ENCODE measurements at regions of chr9 and their contacts with region 1.

Region 1: DNA sequence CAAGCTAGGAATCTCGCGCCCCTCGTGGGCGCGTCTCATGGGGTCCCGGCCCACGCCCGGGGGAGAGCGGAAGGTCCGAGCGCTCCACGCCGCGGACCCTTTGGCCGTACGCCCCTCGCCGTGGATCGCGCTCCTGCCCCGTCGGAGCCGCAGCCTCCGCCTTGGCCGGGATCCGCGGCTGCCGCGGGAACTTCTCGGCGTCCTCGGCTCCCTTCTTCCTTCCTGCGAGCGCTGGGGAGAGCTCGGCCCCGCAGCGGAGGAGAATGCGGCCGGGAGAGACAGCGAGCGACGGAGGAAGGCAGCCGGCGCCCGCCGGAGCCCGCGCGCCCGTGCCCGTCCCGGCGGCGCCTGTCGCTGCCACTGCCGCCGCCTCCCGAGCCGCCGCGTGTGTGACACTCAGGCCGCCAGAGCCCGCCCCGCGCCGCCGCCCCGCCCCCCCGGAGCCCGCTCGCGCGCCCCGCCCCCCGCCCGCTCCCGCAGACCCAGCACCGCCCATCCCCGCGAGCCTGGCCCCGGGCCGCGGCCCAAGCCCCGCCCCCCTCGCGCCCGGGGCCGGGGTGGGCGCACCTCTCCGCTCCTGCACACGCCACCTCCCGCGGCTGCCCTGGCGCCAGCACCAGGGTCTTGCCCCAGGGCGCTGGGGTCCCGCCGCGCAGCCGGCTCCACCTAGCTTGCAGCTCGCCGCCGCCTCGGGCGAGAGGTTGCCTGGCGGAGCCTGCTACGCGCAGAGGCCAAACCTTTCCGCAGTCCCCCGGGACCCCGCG is at the start of gene SHB:
- DNase-seq: peak; percentile 73
- H3K4me3 Mint-ChIP-seq: peak within 1 kb of the TSS; percentile 68
- H3K27ac Mint-ChIP-seq: no peak within 1 kb of the TSS
- H3K4me1 Mint-ChIP-seq: peaks cover 19% of the 10 kb centered on the region
- H3K27me3 Mint-ChIP-seq: peaks cover 8% of the 10 kb centered on the region
- total RNA-seq, gene SHB: 1.2 TPM

Region 2: GRCh38 chr9:37485389-37486219 is 583.4 kb before region 1 on chr9 and contains the start of gene POLR1E:
- CTCF ChIA-PET with region 1: no interaction called
- intact Hi-C with region 1: loop called (anchors 5 kb)
- DNase-seq: peak; percentile 97
- H3K4me3 Mint-ChIP-seq: peak within 1 kb of the TSS; percentile 99
- H3K27ac Mint-ChIP-seq: peak within 1 kb of the TSS; percentile 85
- H3K4me1 Mint-ChIP-seq: peaks cover 39% of the 10 kb centered on the region
- H3K27me3 Mint-ChIP-seq: peaks cover 6% of the 10 kb centered on the region
- total RNA-seq, gene POLR1E: 60.7 to 62.9 TPM

Region 3: GRCh38 chr9:37746848-37747753 is 321.9 kb before region 1 on chr9:
- CTCF ChIA-PET with region 1: no interaction called
- intact Hi-C with region 1: loop called (anchors 5 kb)
- DNase-seq: peak; percentile 80
- H3K4me3 Mint-ChIP-seq: no peak overlapping the region
- H3K27ac Mint-ChIP-seq: no peak overlapping the region
- H3K4me1 Mint-ChIP-seq: no peaks in the 10 kb centered on the region
- H3K27me3 Mint-ChIP-seq: no peaks in the 10 kb centered on the region

Region 4: DNA sequence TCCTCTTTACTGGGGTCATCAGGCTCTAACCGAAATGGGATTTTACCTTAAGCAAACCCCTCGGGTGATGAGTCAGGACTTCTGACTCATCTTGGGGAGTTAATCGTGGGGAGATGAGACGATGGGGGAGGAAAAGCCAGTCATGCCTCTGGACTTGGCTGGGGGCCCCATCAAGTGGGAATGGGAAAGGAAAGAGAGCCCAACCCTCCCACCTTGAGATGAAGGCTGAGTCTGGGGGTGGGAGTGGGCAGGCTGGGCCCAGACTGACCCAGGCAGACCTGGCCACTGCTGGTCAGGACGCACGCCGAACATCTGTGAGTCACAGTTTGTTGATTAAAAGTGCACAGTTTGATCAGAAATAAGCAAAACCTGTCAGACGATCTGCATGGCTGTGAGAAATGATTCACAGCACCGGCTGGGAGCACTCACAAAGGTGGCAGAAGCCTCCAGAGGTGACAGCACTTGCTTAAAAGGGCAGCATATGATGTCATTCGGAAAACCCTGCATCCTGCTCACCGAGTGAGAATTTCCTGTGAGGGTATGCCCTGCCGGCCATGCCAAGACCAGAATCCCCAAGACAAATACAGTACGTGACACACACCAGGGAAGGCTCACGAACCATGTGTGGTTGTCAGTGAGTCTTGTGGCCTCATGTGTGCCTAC is 115.1 kb before region 1 on chr9:
- CTCF ChIA-PET with region 1: no interaction called
- intact Hi-C with region 1: loop called (anchors 2 kb)
- DNase-seq: peak; percentile 66
- H3K4me3 Mint-ChIP-seq: no peak overlapping the region
- H3K27ac Mint-ChIP-seq: peak overlapping the region; percentile 69
- H3K4me1 Mint-ChIP-seq: peaks cover 21% of the 10 kb centered on the region
- H3K27me3 Mint-ChIP-seq: no peaks in the 10 kb centered on the region

Region 5: DNA sequence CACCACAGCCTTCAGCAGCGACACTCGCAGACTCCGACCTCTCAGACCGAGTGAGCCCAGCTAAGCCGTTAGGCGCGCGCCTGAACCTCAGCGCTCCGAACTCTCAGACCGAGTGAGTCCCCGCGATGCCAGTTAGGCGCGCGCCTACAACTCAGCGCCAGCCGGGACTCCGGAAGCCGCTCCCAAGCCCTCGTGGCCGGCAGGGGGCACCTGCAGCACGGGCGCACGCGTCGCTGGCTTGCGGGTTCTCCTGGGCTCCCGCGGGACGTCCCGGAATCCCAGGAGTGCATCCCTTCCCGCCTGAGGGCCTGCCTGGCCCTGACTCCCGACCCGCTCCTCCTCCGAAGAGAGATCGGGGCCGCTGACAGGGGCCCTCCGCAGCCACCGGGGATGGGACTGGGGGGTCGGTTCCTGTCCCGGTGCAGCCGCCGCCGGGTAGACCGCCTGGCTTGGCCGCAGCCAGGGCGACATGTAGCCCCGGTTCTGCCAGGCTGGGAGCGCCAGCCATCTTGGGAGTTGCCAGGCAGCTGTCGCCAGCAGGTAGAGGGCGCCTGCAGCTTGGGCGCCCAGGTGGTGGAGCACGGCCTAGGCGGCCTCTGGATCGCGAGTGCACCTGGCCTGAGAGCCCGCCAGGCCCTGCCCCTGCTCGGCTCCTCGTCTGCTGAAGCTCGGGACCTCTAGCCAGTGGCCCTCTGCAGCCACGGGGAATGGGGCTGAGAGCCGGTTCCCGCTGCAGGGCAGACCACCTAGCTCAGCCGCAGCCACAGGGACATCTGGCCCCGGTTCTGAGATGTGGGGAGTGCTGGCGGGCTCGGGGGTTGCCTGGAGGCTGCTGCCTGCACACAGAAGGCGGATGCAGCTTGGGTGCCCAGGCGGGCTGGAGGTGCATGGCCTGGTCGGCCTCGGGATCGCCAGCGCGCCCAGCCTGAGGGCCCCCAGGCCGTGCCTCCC is 551.7 kb after region 1 on chr9 and contains the start of gene ANKRD18A:
- CTCF ChIA-PET with region 1: no interaction called
- intact Hi-C with region 1: loop called (anchors 5 kb)
- DNase-seq: peak; percentile 87
- H3K4me3 Mint-ChIP-seq: peak within 1 kb of the TSS; percentile 92
- H3K27ac Mint-ChIP-seq: peak within 1 kb of the TSS; percentile 90
- H3K4me1 Mint-ChIP-seq: peaks cover 11% of the 10 kb centered on the region
- H3K27me3 Mint-ChIP-seq: peaks cover 11% of the 10 kb centered on the region
- total RNA-seq, gene ANKRD18A: 6.1 to 8.1 TPM